PC-9 (cell line): ENCODE measurements at regions of chr18 and their contacts with region 1.

Region 1: GRCh38 chr18:76544511-76545345 is 49.7 kb upstream of the ZNF516 start:
- DNase-seq: no peak
- H3K4me3 ChIP-seq: no peak overlapping the region
- H3K27ac ChIP-seq: no peak overlapping the region
- H3K4me1 ChIP-seq: peaks cover 15% of the 10 kb centered on the region
- H3K27me3 ChIP-seq: no peaks in the 10 kb centered on the region
- CTCF ChIP-seq: no peak

Region 2: DNA sequence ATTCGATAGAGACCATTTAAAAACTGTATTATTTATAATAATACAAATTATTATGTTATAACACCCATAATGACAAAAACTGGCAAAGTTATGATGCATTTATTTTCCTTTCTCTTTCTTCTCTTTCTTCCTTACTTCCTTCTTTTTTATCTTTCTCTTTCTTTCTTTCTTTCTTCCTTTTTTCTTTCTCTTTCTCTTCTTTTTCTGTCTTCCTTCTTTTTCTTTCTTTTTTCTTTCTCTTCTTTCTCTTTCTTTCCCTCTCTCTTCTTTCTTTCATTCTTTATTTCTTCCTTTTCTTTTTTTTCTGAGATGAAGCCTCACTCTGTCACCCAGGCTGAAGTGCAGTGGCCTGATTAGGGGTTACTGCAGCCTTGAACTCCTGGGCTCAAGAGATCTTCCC is 22.2 kb before region 1 on chr18:
- CTCF ChIA-PET with region 1: interaction called, 12 read pairs
- POLR2A ChIA-PET with region 1: no interaction called
- intact Hi-C with region 1: no loop called
- DNase-seq: no peak
- H3K4me3 ChIP-seq: no peak overlapping the region
- H3K27ac ChIP-seq: no peak overlapping the region
- H3K4me1 ChIP-seq: peaks cover 19% of the 10 kb centered on the region
- H3K27me3 ChIP-seq: no peaks in the 10 kb centered on the region
- CTCF ChIP-seq: no peak